ENCODE measurements at regions of chr14 and their contacts with region 1.

Region 1: DNA sequence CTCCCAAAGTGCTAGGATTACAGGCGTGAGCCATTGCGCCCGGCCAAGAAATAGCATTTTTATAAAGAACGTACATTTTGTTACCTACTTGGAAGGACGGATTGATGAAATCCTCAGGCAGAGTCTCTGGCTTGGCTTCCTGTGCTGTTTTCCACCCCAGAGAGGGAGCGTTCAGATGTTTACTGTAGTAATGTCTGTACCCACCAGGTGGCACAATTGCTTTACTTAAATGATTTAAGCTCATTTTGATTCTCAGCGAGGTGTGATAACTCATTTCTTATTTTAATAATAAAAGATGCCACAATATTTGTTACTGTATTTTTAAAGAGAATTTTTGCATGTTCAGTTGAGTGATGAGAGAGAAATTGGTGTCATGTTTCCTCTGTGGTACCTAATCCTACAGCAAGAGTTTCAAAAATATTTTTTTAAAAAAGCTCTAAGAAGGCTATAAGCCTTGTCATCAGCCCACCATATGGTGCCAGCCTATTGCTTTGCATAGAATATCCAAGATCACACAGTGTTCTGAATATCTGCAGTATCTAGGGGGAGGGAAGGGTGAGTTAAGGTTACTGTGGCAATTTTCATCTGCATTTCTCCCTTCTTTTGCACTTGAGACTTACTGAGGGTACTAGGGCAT is 82.6 kb upstream of the TRAF3 start:
- DNase-seq: peak; percentile 67

Region 2: DNA sequence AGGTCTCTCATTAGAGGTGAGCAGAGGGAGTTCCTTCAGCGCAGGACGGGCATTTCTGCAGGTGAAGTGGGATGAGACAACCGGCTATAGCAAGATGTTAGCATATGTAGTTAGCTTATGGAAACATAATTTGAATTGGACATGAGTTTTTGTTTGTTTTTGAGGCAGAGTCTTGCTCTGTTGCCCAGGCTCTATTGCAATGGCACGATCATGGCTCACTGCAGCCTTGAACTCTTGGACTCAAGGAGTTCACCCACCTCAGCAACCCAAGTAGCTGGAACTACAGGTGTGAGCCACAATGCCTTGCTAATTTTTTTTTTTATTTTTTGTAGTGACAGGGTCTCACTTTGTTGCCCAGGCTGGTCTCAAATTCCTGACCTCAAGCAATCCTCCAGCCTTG is 33.0 kb before region 1 on chr14:
- CTCF ChIA-PET with region 1: interaction called, 10 read pairs
- POLR2A ChIA-PET with region 1: no interaction called
- DNase-seq: no peak

Region 3: DNA sequence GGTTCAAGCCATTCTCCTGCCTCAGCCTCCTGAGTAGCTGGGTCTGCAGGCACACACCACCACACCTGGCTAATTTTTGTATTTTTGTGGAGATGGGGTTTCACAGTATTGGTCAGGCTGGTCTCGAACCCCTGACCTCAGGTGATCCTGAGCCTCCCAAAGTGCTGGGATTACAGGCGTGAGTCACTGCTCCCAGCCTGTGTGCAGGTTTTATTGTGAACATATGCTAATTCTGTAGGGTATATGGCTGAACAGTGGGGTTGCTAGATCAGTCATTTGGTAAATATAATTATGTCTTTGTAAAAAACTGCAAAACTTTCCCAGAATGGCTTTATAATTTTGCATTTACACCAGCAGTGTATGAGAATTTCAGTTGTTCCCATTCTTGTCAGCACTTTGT is 16.3 kb before region 1 on chr14:
- CTCF ChIA-PET with region 1: no interaction called
- POLR2A ChIA-PET with region 1: no interaction called
- DNase-seq: no peak

Region 4: GRCh38 chr14:102914474-102915291 is 220.0 kb after region 1 on chr14:
- CTCF ChIA-PET with region 1: interaction called, 12 read pairs
- POLR2A ChIA-PET with region 1: no interaction called
- DNase-seq: no peak

Measured in HEK293T (cell line).